ENCODE measurements at regions of chr1 and their contacts with region 1.

Region 1: GRCh38 chr1:67269061-67269460 is 38.6 kb upstream of the IL12RB2 start:
- DNase-seq: no peak
- H3K4me3 ChIP-seq: no peak overlapping the region
- H3K27ac ChIP-seq: no peak overlapping the region
- H3K4me1 ChIP-seq: no peaks in the 10 kb centered on the region
- H3K27me3 ChIP-seq: no peaks in the 10 kb centered on the region
- CTCF ChIP-seq: no peak
- POLR2A ChIP-seq: no peak

Region 2: GRCh38 chr1:66532798-66533783 is 736.0 kb before region 1 on chr1:
- intact Hi-C with region 1: no loop called
- DNase-seq: no peak
- H3K4me3 ChIP-seq: peak overlapping the region; percentile 41 to 64 (median 56)
- H3K27ac ChIP-seq: peak overlapping the region; percentile 62 to 65
- H3K4me1 ChIP-seq: no peaks in the 10 kb centered on the region
- H3K27me3 ChIP-seq: no peaks in the 10 kb centered on the region
- CTCF ChIP-seq: no peak
- POLR2A ChIP-seq: no peak

Region 3: GRCh38 chr1:67230539-67230938 is 38.5 kb before region 1 on chr1:
- intact Hi-C with region 1: no loop called
- DNase-seq: no peak
- H3K4me3 ChIP-seq: no peak overlapping the region
- H3K27ac ChIP-seq: no peak overlapping the region
- H3K4me1 ChIP-seq: no peaks in the 10 kb centered on the region
- H3K27me3 ChIP-seq: no peaks in the 10 kb centered on the region
- CTCF ChIP-seq: no peak
- POLR2A ChIP-seq: no peak

Region 4: GRCh38 chr1:67256291-67257172 is 12.5 kb before region 1 on chr1:
- intact Hi-C with region 1: loop called (anchors 2 kb)
- DNase-seq: no peak
- H3K4me3 ChIP-seq: no peak overlapping the region
- H3K27ac ChIP-seq: no peak overlapping the region
- H3K4me1 ChIP-seq: no peaks in the 10 kb centered on the region
- H3K27me3 ChIP-seq: no peaks in the 10 kb centered on the region
- CTCF ChIP-seq: no peak
- POLR2A ChIP-seq: no peak

Measured in breast epithelium (tissue), 4 donors.